Activated CD8-positive, alpha-beta T cell treated with anti-CD3 and anti-CD28 coated beads for 36 hours (primary cell): ENCODE measurements at regions of chr9 and their contacts with region 1.

Region 1: DNA sequence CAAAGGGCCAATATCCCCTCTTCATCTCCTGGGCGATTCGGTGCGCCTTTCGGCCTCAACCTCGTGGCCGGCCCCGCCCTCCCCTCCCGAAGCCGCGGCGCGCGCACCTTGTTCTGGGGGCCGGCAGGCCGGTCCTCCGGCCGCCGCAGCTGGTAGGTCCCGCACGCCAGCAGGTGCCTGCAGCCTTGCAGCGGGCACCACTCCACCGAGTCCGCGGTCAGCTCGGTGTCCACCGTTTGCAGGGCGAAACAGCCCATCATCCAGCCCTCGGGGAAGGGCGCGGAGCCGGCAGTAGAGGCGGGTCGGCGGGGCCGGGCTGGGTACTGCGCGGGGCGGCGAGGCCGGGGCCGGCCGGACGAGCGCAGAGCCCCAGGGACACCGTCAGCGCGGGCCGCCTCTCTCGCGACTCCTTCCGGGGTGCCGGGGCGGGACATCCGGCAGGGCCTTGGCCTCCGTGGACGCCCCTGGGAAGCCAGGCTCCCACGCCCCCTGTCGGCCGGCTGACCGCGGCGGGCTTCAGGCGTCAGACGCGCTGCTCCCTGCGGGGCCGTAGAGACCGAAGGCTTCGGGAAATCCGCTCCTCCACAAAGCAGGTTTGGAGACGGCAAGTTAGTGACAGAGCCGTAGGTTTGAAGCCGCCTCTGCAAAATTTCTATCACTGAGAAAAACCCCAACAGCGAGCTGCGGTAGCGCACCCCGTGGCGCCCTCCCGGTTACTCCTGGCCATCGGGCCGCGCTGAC is at the start of gene DPH7:
- DNase-seq: peak; percentile 96
- ATAC-seq: peak; percentile 98
- H3K4me3 Mint-ChIP-seq: peak within 1 kb of the TSS; percentile 84
- H3K27ac Mint-ChIP-seq: peak within 1 kb of the TSS; percentile 64
- H3K4me1 Mint-ChIP-seq: peaks cover 35% of the 10 kb centered on the region
- H3K27me3 Mint-ChIP-seq: no peaks in the 10 kb centered on the region
- CTCF ChIP-seq: peak; percentile 85
- total RNA-seq, gene DPH7: 33.7 to 35.0 TPM

Region 2: GRCh38 chr9:137551651-137552384 is 26.9 kb before region 1 on chr9 and contains the start of gene MRPL41:
- CTCF ChIA-PET with region 1: interaction called, 11 read pairs
- POLR2A ChIA-PET with region 1: no interaction called
- intact Hi-C with region 1: no loop called
- DNase-seq: peak; percentile 90
- ATAC-seq: peak; percentile 93
- H3K4me3 Mint-ChIP-seq: peak within 1 kb of the TSS; percentile 77
- H3K27ac Mint-ChIP-seq: peak within 1 kb of the TSS; percentile 47
- H3K4me1 Mint-ChIP-seq: peaks cover 14% of the 10 kb centered on the region
- H3K27me3 Mint-ChIP-seq: no peaks in the 10 kb centered on the region
- CTCF ChIP-seq: no peak
- total RNA-seq, gene MRPL41: 42.8 to 43.9 TPM

Region 3: GRCh38 chr9:137590462-137591383 is 12.0 kb after region 1 on chr9 and contains the start of gene ZMYND19:
- CTCF ChIA-PET with region 1: interaction called, 20 read pairs
- POLR2A ChIA-PET with region 1: interaction called, 33 read pairs
- intact Hi-C with region 1: no loop called
- DNase-seq: peak; percentile 85
- ATAC-seq: peak; percentile 98
- H3K4me3 Mint-ChIP-seq: peak within 1 kb of the TSS; percentile 91
- H3K27ac Mint-ChIP-seq: peak within 1 kb of the TSS; percentile 94
- H3K4me1 Mint-ChIP-seq: peaks cover 23% of the 10 kb centered on the region
- H3K27me3 Mint-ChIP-seq: no peaks in the 10 kb centered on the region
- CTCF ChIP-seq: peak; percentile 3
- total RNA-seq, gene ZMYND19: 45.9 to 46.5 TPM

Region 4: DNA sequence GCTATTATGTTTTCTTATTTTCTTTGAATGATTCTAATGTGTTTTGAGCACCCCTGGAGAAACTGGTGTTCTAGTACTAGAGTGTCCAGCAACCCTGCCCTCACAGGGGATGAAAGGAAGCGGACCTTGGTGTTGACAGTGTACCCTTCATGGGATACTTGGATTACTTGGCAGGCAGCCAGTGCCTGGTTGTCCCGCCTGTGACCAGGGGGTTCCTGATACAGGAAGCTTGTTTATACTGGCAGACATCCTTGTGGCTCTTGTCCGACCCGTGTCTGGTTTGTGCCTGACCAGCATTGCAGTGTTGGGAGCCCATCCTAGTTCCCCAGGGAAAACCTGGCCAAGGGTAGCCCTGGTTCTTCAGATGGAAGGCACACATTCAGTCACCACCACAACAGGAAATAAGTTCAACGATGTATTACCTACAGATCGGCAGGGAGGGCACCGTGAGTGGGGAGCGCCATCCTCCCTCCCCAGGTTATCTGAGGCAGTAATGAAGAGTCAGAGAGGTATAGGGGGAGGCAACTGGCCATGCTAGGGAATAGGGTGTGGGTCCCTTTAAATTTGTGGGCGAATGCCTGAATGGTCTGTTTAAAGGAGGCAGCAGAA is 346.2 kb after region 1 on chr9:
- CTCF ChIA-PET with region 1: no interaction called
- POLR2A ChIA-PET with region 1: no interaction called
- intact Hi-C with region 1: no loop called
- DNase-seq: no peak
- ATAC-seq: no peak
- H3K4me3 Mint-ChIP-seq: no peak overlapping the region
- H3K27ac Mint-ChIP-seq: no peak overlapping the region
- H3K4me1 Mint-ChIP-seq: no peaks in the 10 kb centered on the region
- H3K27me3 Mint-ChIP-seq: peaks cover 14% of the 10 kb centered on the region
- CTCF ChIP-seq: no peak